CD4-positive, alpha-beta T cell (primary cell): ENCODE measurements at regions of chr11 and their contacts with region 1.

Region 1: GRCh38 chr11:42727879-42728278 is 583.9 kb upstream of the API5 start:
- DNase-seq: no peak
- ATAC-seq: no peak
- H3K4me3 ChIP-seq: no peak overlapping the region
- H3K4me3 Mint-ChIP-seq: no peak overlapping the region
- H3K27ac ChIP-seq: no peak overlapping the region
- H3K27ac Mint-ChIP-seq: no peak overlapping the region
- H3K4me1 ChIP-seq: no peaks in the 10 kb centered on the region
- H3K4me1 Mint-ChIP-seq: no peaks in the 10 kb centered on the region
- H3K27me3 ChIP-seq: no peaks in the 10 kb centered on the region
- H3K27me3 Mint-ChIP-seq: no peaks in the 10 kb centered on the region
- CTCF ChIP-seq: no peak

Region 2: GRCh38 chr11:42473116-42473515 is 254.8 kb before region 1 on chr11:
- CTCF ChIA-PET with region 1: no interaction called
- POLR2A ChIA-PET with region 1: no interaction called
- intact Hi-C with region 1: no loop called
- DNase-seq: no peak
- ATAC-seq: no peak
- H3K4me3 ChIP-seq: no peak overlapping the region
- H3K4me3 Mint-ChIP-seq: no peak overlapping the region
- H3K27ac ChIP-seq: no peak overlapping the region
- H3K27ac Mint-ChIP-seq: no peak overlapping the region
- H3K4me1 ChIP-seq: no peaks in the 10 kb centered on the region
- H3K4me1 Mint-ChIP-seq: no peaks in the 10 kb centered on the region
- H3K27me3 ChIP-seq: no peaks in the 10 kb centered on the region
- H3K27me3 Mint-ChIP-seq: no peaks in the 10 kb centered on the region
- CTCF ChIP-seq: no peak

Region 3: GRCh38 chr11:42802201-42802899 is 74.5 kb after region 1 on chr11:
- CTCF ChIA-PET with region 1: no interaction called
- POLR2A ChIA-PET with region 1: no interaction called
- intact Hi-C with region 1: loop called in 1 of 2 experiments (anchors 10 kb)
- DNase-seq: no peak
- ATAC-seq: no peak
- H3K4me3 ChIP-seq: no peak overlapping the region
- H3K4me3 Mint-ChIP-seq: no peak overlapping the region
- H3K27ac ChIP-seq: no peak overlapping the region
- H3K27ac Mint-ChIP-seq: no peak overlapping the region
- H3K4me1 ChIP-seq: no peaks in the 10 kb centered on the region
- H3K4me1 Mint-ChIP-seq: no peaks in the 10 kb centered on the region
- H3K27me3 ChIP-seq: no peaks in the 10 kb centered on the region
- H3K27me3 Mint-ChIP-seq: no peaks in the 10 kb centered on the region
- CTCF ChIP-seq: no peak

Region 4: DNA sequence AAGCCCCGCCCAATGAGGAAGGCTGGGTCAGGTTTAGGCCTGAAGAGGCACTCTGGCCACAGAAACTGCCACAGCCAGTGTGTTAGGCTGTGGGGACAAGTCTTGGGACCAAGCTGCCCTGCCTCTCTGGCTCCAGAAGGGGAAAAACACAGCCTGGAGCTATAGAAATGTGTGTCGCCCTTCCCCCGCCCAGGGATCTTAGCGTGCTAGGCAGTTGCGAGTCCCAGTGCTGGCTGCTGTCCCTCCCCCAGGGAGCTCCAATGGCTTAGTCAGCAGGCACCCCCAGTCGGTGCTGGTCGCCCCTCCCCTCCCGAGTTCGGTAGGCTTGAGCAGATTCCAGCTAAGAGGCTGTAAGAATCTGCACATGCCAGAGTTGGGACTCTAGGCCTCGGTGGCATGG is 484.4 kb after region 1 on chr11:
- CTCF ChIA-PET with region 1: no interaction called
- POLR2A ChIA-PET with region 1: no interaction called
- intact Hi-C with region 1: no loop called
- DNase-seq: peak in 1 of 14 experiments; percentile 2
- ATAC-seq: no peak
- H3K4me3 ChIP-seq: no peak overlapping the region
- H3K4me3 Mint-ChIP-seq: no peak overlapping the region
- H3K27ac ChIP-seq: no peak overlapping the region
- H3K27ac Mint-ChIP-seq: no peak overlapping the region
- H3K4me1 ChIP-seq: no peaks in the 10 kb centered on the region
- H3K4me1 Mint-ChIP-seq: no peaks in the 10 kb centered on the region
- H3K27me3 ChIP-seq: no peaks in the 10 kb centered on the region
- H3K27me3 Mint-ChIP-seq: no peaks in the 10 kb centered on the region
- CTCF ChIP-seq: no peak